HEK293 (cell line): ENCODE measurements at regions of chr3 and their contacts with region 1.

Region 1: DNA sequence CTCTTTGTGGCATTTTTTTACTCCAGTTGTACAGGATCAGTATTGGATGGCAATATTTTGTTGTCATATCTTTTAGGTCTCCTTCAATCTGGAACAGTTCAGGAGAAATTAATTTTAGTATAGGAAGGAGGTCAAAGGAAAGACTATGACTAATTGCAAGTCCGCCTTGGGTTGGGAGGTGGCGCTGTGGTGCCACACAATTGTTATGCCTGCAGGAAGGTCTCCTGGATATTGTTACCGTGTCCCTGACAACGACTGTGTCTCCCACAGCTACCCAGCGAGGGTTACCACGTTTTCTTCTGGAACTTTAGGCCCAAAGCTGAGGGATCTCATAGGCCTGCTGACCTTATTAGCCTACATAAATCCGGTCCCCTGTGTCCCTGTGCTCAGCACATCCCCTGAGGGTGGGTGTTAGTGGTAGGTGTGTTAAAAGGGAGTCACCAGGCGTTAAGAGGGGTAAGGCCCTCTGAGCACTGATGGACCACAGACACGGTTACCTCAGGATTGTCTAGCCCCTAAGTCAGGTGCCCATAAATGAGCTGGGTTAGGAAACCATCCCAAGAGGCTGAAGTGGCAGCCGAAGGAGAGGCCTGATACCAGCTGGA is 31.5 kb downstream of the KCNAB1 start:
- H3K4me3 ChIP-seq: no peak overlapping the region
- H3K27ac ChIP-seq: no peak overlapping the region
- H3K4me1 ChIP-seq: no peaks in the 10 kb centered on the region
- CTCF ChIP-seq: peak; percentile 32; the same call in 1 of the 2 replicates

Region 2: DNA sequence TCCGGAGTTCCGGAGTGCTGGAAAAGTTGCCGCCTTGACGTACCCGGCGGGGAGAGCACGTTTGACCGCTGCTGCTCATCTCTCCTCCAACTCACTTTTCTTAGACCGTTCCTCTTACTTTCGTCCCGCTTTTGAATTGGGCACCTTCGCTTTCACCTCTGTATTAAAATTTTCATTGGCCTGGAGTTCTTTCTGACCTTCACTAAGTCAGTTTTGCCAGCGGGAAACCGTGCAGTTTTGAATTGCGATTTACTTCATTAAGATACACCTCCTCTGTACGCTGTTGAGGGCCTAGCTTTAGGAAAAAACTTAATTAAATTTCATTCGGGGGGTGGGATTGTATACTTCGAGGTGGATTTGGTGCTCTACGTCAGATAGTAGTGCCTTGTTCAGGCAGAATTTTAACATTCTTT is 280.2 kb before region 1 on chr3:
- CTCF ChIA-PET with region 1: no interaction called
- POLR2A ChIA-PET with region 1: no interaction called
- H3K4me3 ChIP-seq: peak overlapping the region; percentile 99
- H3K27ac ChIP-seq: peak overlapping the region; percentile 94
- H3K4me1 ChIP-seq: peaks cover 2% of the 10 kb centered on the region; the same call in 1 of the 2 replicates
- CTCF ChIP-seq: no peak

Region 3: GRCh38 chr3:156135921-156136638 is 15.8 kb before region 1 on chr3:
- CTCF ChIA-PET with region 1: interaction called, 13 read pairs
- POLR2A ChIA-PET with region 1: no interaction called
- H3K4me3 ChIP-seq: no peak overlapping the region
- H3K27ac ChIP-seq: no peak overlapping the region
- H3K4me1 ChIP-seq: no peaks in the 10 kb centered on the region
- CTCF ChIP-seq: no peak

Region 4: DNA sequence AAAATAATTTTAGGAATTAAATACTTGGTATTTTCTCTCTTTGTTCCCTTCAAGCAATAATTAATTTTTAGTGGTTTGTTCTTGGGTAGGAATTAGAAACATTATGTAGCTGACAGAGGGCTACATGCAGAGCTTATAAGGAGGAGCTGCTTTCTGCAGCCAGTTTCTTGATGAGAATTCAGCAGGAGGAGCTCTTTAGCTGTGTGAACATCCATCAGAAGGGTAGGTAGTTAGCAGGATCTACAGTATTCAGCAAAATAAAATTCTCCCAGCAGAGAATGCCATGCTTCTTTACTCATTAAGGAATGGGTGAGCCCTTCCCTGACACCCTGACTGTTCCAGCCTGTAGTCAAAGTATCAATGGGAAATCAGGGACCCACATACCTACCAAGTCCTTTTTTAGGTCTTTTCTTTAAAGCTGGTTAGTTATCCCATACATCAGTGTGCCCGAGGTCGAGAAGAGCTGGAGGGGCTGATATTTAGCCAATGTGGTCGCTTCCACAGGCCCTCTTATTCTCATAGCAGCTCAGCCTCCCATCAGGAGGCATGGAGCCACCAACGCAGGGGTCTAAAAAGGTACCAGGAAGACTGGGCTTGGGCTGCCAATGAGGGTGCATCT is 22.4 kb after region 1 on chr3:
- CTCF ChIA-PET with region 1: interaction called, 14 read pairs
- POLR2A ChIA-PET with region 1: no interaction called
- H3K4me3 ChIP-seq: no peak overlapping the region
- H3K27ac ChIP-seq: no peak overlapping the region
- H3K4me1 ChIP-seq: no peaks in the 10 kb centered on the region
- CTCF ChIP-seq: no peak

Region 5: GRCh38 chr3:156382458-156383346 is 230.8 kb after region 1 on chr3:
- CTCF ChIA-PET with region 1: interaction called, 36 read pairs
- POLR2A ChIA-PET with region 1: no interaction called
- H3K4me3 ChIP-seq: no peak overlapping the region
- H3K27ac ChIP-seq: no peak overlapping the region
- H3K4me1 ChIP-seq: no peaks in the 10 kb centered on the region
- CTCF ChIP-seq: no peak

Region 6: GRCh38 chr3:156449712-156450574 is 298.0 kb after region 1 on chr3:
- CTCF ChIA-PET with region 1: interaction called, 35 read pairs
- POLR2A ChIA-PET with region 1: no interaction called
- H3K4me3 ChIP-seq: no peak overlapping the region
- H3K27ac ChIP-seq: no peak overlapping the region
- H3K4me1 ChIP-seq: no peaks in the 10 kb centered on the region
- CTCF ChIP-seq: no peak

Region 7: GRCh38 chr3:156509189-156510174 is 357.6 kb after region 1 on chr3:
- CTCF ChIA-PET with region 1: interaction called, 97 read pairs
- POLR2A ChIA-PET with region 1: no interaction called
- H3K4me3 ChIP-seq: no peak overlapping the region
- H3K27ac ChIP-seq: no peak overlapping the region
- H3K4me1 ChIP-seq: no peaks in the 10 kb centered on the region
- CTCF ChIP-seq: no peak

Region 8: DNA sequence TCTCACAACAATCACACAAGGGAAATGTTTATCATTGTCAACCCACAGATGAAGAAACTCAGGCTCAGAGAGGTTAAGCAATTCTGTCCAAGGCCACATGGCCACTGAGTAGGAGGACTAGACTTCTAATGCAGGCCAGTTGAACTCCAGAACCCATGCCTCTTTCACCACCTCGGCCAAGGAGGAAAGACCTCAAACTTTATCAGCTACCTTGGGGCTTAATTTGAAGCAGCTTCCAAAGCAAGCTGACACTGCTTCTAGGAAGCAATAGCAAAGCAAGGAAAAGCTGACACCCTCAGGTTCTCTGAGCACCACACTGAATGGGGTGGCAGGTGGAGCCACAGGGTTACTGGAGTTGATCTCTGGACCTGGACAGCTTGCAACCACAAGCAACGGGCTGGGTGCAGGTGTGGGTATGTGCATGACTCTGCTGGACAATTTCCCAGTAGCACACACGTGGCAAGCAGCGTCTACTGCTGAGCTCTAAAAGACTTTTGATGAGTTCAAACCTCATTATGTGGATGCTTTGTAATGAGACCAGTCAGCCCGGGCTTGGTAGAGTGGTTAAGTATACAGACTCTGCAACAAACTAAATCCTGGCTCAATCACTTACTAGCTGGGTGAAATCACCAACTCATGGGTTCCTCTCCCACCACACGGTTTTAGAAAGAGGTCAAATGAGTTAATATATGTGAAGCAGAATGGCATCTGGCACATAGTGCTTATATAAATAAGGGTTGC is 984.9 kb after region 1 on chr3:
- CTCF ChIA-PET with region 1: interaction called, 18 read pairs
- POLR2A ChIA-PET with region 1: no interaction called
- H3K4me3 ChIP-seq: no peak overlapping the region
- H3K27ac ChIP-seq: no peak overlapping the region
- H3K4me1 ChIP-seq: 0 out of 2 replicates have a peak, but pooled peaks cover 2% of the 10 kb centered on the region
- CTCF ChIP-seq: no peak